ENCODE measurements at regions of chr5 and their contacts with region 1.

Region 1: DNA sequence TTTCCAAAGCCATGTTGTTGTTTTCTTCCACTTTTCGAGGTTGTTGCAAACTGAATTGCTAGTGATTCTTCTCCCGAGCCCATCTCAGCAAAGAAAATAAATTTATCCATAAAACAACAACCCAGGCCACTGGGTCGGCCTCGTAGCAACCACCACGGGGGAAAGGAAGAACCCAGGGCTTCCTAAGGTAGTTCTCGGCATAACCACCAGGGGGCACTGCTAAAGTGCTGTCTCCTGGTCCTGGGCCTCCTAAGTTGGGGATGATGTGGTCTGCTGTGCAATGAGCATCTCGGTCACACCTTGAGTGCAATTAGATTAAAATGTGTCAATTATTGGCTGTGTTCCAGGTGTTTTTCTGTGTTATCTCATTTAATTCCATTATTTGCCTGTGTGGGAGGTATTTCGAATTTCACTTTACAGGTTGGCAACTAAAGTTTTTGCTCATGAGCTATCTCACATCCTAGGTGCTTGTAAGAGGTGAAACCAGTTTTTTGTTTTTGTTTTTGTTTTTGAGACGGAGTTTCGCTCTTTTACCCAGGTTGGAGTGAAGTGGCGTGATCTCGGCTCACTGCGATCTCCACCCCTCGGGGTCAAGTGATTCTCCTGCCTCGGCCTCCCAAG is 102.8 kb upstream of the DAP start:
- DNase-seq: peak; percentile 75
- H3K4me3 Mint-ChIP-seq: no peak overlapping the region
- H3K27ac Mint-ChIP-seq: no peak overlapping the region
- H3K4me1 Mint-ChIP-seq: no peaks in the 10 kb centered on the region
- H3K27me3 Mint-ChIP-seq: peaks cover 6% of the 10 kb centered on the region

Region 2: DNA sequence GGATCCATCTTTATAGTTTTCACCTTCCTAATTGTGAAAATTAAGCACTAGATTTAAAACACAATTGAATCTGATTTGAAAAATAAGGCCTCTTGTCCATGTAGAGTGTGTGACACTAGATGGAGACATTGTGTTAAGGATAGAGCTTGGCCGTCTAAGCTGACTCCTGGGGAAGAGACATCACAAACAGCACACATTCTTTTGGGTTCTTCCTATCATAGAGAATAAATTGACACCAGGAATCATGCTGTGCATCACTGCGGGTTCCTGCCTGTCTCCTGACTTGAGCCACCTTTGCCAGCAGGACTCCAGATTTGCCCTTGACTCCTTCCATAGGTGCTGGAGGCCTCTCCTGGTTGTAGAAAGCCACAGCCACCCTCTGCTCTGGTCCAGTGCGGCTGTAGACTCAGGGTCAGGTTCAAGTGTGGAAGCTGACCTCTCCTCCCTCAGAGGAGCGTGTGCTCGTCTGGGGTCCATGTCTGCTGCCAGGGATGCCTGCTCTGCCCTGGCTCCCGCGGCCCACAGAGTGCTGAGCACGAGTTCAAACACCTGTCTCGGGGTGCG is 411.0 kb before region 1 on chr5:
- CTCF ChIA-PET with region 1: no interaction called
- intact Hi-C with region 1: loop called (anchors 2 kb)
- DNase-seq: peak; percentile 22
- H3K4me3 Mint-ChIP-seq: no peak overlapping the region
- H3K27ac Mint-ChIP-seq: no peak overlapping the region
- H3K4me1 Mint-ChIP-seq: peaks cover 1% of the 10 kb centered on the region
- H3K27me3 Mint-ChIP-seq: no peaks in the 10 kb centered on the region

Region 3: GRCh38 chr5:11046160-11046559 is 182.3 kb after region 1 on chr5:
- CTCF ChIA-PET with region 1: no interaction called
- intact Hi-C with region 1: loop called (anchors 10 kb)
- DNase-seq: no peak
- H3K4me3 Mint-ChIP-seq: no peak overlapping the region
- H3K27ac Mint-ChIP-seq: no peak overlapping the region
- H3K4me1 Mint-ChIP-seq: no peaks in the 10 kb centered on the region
- H3K27me3 Mint-ChIP-seq: peaks cover 2% of the 10 kb centered on the region

Region 4: DNA sequence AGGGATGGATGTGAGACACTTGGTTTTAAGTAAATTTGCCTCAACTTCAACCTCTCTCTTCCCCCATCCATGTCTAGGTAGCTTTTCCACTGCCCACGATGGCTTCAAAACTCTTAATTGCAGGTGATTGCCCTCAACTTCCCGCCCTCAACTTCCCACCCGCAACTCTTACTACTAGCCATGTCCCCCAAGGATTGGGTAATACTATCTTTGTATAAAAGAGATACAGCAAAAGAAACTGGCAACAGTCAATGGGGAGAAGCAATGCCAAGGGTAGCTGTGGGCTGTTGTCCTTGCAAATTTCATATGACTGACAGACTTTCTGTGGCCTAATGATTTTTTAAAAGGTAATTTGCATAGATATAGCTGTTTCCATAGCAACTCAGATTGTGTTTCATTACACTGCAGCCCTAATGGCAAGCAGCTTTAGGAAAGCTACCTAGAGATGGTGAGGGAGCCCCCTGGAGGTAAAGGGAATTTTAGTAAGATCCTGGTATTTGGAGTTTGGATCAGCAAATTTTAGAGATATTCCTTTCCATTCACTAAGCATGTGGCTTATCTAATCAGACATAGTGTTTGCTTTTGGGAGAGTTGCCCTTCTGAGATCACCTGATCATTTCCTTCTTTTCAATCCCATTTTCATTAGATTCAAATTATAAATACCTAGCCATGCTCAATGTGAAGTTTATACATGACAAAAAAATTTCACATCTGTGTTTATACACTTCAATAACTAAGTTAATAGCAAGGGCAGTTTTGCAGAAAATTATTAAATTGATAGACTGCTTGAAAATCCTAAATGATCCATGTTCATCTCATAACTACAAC is 318.8 kb after region 1 on chr5:
- CTCF ChIA-PET with region 1: no interaction called
- intact Hi-C with region 1: loop called (anchors 2 kb)
- DNase-seq: no peak
- H3K4me3 Mint-ChIP-seq: no peak overlapping the region
- H3K27ac Mint-ChIP-seq: no peak overlapping the region
- H3K4me1 Mint-ChIP-seq: peaks cover 6% of the 10 kb centered on the region
- H3K27me3 Mint-ChIP-seq: peaks cover 2% of the 10 kb centered on the region

Region 5: DNA sequence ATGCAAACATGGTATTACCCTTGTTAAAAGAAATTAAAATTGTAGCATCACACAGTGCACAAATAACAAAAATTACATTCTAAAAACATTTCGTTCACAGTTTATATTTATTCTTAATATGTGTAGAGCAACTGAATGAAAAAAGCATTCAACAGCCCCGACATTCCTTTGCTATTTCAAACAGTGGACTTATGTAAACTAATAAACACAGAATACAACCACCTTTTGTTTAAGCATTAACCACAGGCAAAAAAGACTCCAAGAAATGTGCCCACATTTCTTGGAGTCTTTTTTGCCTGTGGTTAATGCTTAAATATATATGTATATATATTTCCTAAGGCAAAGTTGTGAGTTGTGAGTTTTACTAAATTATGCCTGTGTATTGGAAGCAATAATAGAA is 429.6 kb after region 1 on chr5:
- CTCF ChIA-PET with region 1: no interaction called
- intact Hi-C with region 1: no loop called
- DNase-seq: no peak
- H3K4me3 Mint-ChIP-seq: no peak overlapping the region
- H3K27ac Mint-ChIP-seq: no peak overlapping the region
- H3K4me1 Mint-ChIP-seq: no peaks in the 10 kb centered on the region
- H3K27me3 Mint-ChIP-seq: peaks cover 10% of the 10 kb centered on the region

Region 6: GRCh38 chr5:11494340-11494739 is 630.5 kb after region 1 on chr5:
- CTCF ChIA-PET with region 1: no interaction called
- intact Hi-C with region 1: loop called (anchors 10 kb)
- DNase-seq: no peak
- H3K4me3 Mint-ChIP-seq: no peak overlapping the region
- H3K27ac Mint-ChIP-seq: no peak overlapping the region
- H3K4me1 Mint-ChIP-seq: no peaks in the 10 kb centered on the region
- H3K27me3 Mint-ChIP-seq: peaks cover 3% of the 10 kb centered on the region

Region 7: DNA sequence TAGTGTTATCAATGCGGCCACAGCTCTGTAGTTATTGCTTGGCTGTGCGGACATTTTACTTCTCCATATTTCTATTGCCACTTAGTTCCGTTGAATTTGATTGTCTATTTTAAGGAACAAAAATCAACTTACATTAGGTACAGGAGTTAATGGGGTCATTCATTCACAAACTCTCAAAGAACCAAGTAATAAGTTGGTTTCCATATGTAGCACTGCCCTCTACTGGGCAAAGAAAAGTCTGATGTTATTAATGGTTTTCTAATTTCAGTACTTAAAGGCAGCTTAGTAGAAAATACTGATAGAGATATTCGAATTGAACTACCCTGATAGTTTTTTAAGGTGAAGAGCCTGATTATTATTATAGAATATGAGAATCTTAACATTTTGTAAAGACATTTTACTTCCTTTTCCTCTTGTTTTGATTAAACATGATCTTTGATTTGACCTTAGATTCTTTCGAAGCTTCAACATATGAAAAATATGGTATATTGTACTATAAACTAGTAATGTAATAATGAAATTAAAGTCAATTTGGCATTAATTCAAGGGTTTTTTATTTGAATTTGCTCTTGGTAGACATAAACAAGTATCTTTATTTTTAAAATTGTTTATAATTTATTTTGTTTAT is 1159.9 kb after region 1 on chr5:
- CTCF ChIA-PET with region 1: interaction called, 3 read pairs
- intact Hi-C with region 1: loop called (anchors 5 kb)
- DNase-seq: no peak
- H3K4me3 Mint-ChIP-seq: no peak overlapping the region
- H3K27ac Mint-ChIP-seq: no peak overlapping the region
- H3K4me1 Mint-ChIP-seq: no peaks in the 10 kb centered on the region
- H3K27me3 Mint-ChIP-seq: no peaks in the 10 kb centered on the region